ENCODE measurements at regions of chr2 and their contacts with region 1.

Region 1: GRCh38 chr2:112054847-112055729 is at the start of gene TMEM87B:
- DNase-seq: peak; percentile 99
- H3K4me3 ChIP-seq: peak within 1 kb of the TSS; percentile 46 to 89 (median 72)
- H3K27ac ChIP-seq: peak within 1 kb of the TSS; percentile 97 to 98 (median 98)
- H3K4me1 ChIP-seq: peaks cover 13 to 66% (median 36%) of the 10 kb centered on the region in 4 donors
- H3K27me3 ChIP-seq: no peaks in the 10 kb centered on the region
- CTCF ChIP-seq: peak in 1 of 5 experiments; percentile 13
- EP300 ChIP-seq: no peak
- POLR2A ChIP-seq: peak; percentile 91
- total RNA-seq, gene TMEM87B: 21.9 to 74.5 (median 60.7) TPM

Region 2: GRCh38 chr2:112275306-112275886 is 220.3 kb after region 1 on chr2 and contains the start of gene ZC3H6:
- in situ Hi-C with region 1: no loop called
- intact Hi-C with region 1: loop called (anchors 10 kb)
- DNase-seq: peak; percentile 100
- H3K4me3 ChIP-seq: peak within 1 kb of the TSS; percentile 70 to 100 (median 92)
- H3K27ac ChIP-seq: peak within 1 kb of the TSS; percentile 99 to 100 (median 100)
- H3K4me1 ChIP-seq: peaks cover 5 to 19% (median 11%) of the 10 kb centered on the region in 4 donors
- H3K27me3 ChIP-seq: no peaks in the 10 kb centered on the region
- CTCF ChIP-seq: peak in 4 of 5 experiments; percentile 19 to 64 (median 44)
- EP300 ChIP-seq: no peak
- POLR2A ChIP-seq: peak; percentile 89
- total RNA-seq, gene ZC3H6: 2.8 to 13.0 (median 8.5) TPM

Measured in transverse colon (tissue), 4 donors.